Mammary epithelial cell (primary cell): ENCODE measurements at regions of chr4 and their contacts with region 1.

Region 1: DNA sequence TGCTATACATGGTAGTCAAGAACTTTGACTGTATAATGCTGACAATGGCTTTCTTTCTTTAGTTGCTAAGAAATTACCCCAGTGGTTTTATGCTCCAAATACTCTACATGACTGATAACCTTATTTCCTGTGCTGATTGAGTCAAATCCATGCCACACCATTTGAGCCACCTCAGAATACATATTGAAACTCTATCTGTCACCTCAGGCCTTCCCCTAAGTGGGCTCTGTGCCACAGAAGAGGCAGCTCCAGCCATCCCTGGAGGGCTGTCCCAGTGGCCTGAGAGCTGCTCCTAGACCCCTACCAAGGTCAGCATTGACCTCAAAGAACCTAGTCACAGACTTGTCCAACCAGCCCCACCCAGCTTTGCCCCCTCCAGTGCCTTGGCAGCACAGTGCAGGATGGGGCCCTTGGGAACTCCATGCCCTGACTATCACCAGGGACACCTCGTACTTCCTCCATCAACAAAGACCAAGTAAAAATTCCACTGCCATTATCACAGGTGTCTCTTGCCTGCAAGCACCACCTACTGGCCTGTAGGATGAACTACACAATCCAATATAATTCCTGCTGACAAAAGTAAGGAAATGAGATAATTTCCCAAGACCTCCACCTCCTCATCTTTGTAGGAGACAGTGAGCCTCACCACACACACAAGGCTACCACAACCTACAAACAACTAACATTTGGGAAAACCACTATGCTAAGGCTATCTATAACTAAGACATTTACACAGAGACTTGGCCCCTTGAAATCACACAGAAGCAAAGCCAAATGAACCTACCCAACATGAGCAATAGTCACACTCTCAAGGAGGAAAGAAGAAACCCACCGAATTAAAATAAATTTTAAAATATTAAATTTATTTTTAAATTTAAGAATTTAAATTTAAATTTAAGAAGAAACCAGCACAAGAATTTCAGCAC is 239.9 kb downstream of the NKX6-1 start:
- DNase-seq: peak; percentile 21
- H3K4me3 ChIP-seq: no peak overlapping the region
- H3K27ac ChIP-seq: no peak overlapping the region
- H3K4me1 ChIP-seq: no peaks in the 10 kb centered on the region
- H3K27me3 ChIP-seq: no peaks in the 10 kb centered on the region
- CTCF ChIP-seq: peak; percentile 79 to 82

Region 2: GRCh38 chr4:83503974-83504373 is 755.2 kb before region 1 on chr4:
- CTCF ChIA-PET with region 1: no interaction called
- dilution Hi-C with region 1: no loop called
- in situ Hi-C with region 1: no loop called
- intact Hi-C with region 1: loop called (anchors 5 kb)
- DNase-seq: no peak
- H3K4me3 ChIP-seq: no peak overlapping the region
- H3K27ac ChIP-seq: no peak overlapping the region
- H3K4me1 ChIP-seq: no peaks in the 10 kb centered on the region
- H3K27me3 ChIP-seq: no peaks in the 10 kb centered on the region
- CTCF ChIP-seq: no peak

Region 3: DNA sequence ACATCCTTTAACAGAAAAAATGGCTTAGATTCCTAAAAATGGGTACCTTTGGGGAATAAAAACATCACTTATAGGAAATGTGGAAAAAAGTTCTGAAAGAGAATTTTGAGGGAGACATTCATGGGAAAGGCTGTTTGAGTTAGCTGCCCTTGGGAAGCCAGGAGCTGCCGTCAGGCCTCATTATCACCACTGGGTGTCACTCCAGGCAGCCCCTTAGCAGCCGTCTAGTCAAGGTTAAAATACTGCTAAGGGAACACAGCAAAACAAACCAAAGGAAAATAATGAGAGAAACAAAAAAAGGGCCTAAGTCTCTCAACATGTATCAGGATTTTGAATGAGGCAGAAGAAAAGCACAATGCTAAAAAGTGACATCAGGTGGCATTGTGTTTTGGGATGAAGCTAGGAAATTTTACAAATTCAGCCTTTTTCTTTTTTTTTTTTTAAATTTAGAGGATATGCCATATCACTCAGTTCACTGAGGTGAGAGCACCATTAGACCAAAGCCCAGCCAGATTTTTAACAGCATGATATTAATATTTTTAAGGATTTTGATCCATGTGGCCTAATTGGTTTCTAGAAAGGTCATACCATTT is 488.0 kb before region 1 on chr4:
- CTCF ChIA-PET with region 1: no interaction called
- dilution Hi-C with region 1: no loop called
- in situ Hi-C with region 1: no loop called
- intact Hi-C with region 1: loop called (anchors 1 kb)
- DNase-seq: peak; percentile 25
- H3K4me3 ChIP-seq: no peak overlapping the region
- H3K27ac ChIP-seq: no peak overlapping the region
- H3K4me1 ChIP-seq: no peaks in the 10 kb centered on the region
- H3K27me3 ChIP-seq: peaks cover 2% of the 10 kb centered on the region
- CTCF ChIP-seq: peak; percentile 74 to 80

Region 4: GRCh38 chr4:83961575-83961974 is 297.6 kb before region 1 on chr4:
- CTCF ChIA-PET with region 1: no interaction called
- dilution Hi-C with region 1: no loop called
- in situ Hi-C with region 1: no loop called
- intact Hi-C with region 1: loop called (anchors 10 kb)
- DNase-seq: no peak
- H3K4me3 ChIP-seq: no peak overlapping the region
- H3K27ac ChIP-seq: no peak overlapping the region
- H3K4me1 ChIP-seq: no peaks in the 10 kb centered on the region
- H3K27me3 ChIP-seq: peaks cover 2% of the 10 kb centered on the region
- CTCF ChIP-seq: peak; percentile 4 to 39

Region 5: DNA sequence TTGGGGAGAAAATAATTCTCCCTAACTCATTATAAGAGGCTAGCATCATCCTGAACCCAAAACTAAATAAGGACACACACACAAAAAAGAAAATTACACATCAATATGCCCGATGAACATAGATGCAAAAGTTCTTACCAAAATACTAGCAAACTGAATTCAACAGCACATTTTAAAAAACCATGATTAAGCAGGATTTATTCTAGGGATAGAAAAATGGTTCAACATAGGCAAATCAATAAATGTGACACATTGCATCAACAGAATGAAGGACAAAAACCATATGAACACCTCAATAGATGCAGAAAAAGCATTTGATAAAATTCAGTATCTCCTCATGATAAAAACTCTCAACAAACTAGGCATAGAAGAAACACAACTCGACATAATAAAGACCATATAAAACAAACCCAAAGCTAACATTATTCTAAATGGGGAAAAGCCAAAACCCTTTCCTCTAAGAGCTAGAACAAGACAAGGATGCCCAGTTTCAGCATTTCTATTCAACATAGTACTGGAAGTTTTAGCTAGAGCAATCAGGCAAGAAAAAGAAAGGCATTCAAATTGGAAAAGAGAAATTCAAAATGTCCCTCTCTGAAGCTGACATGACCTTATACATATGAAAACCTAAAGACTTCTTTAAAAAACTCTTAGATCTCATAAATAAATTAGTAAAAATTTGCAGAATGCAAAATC is 39.0 kb after region 1 on chr4:
- CTCF ChIA-PET with region 1: no interaction called
- dilution Hi-C with region 1: no loop called
- in situ Hi-C with region 1: no loop called
- intact Hi-C with region 1: no loop called
- DNase-seq: no peak
- H3K4me3 ChIP-seq: no peak overlapping the region
- H3K27ac ChIP-seq: no peak overlapping the region
- H3K4me1 ChIP-seq: no peaks in the 10 kb centered on the region
- H3K27me3 ChIP-seq: no peaks in the 10 kb centered on the region
- CTCF ChIP-seq: no peak

Region 6: DNA sequence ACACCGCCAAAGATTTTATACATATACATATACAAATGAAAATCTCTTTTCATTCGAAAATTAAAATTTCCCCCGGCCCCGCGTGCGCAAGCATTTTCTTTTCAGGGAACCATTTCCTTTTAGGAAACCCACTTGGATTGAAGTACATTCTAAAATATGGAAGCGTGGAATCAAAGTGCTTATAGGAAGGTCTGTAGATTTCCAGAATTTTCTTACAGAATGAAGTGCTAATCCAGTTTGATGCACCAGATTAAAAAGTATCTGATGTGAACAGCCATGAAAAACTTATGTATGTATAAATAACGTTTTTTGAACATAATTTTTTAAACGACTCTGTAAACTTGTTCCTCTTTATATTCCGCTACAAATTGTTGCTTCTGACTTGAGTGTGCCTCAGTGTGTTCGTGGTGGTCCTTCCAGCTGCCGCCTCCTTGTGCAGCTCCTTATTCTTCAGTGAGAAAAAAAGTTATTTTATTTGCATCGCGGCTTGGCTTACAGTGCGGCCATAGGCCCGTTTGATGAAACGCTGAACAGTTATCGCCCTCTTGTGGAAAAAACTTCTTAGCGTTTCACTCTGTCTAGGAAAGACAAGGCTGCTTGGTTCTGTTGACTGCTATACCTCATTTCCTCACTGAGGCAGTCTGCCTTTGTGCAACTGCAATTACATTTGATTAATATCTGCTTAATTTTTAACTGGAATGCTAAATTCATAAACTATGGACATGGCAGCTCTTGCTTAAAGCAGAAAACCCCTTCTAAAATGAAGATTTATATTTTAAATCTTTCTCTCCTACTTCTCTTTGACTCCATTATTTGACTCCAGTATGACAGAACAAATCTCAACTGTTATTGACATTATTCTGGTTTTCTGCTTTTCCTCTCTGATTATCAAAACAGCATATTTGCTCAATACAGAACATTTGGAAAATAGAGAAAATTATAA is 244.6 kb after region 1 on chr4:
- CTCF ChIA-PET with region 1: no interaction called
- dilution Hi-C with region 1: no loop called
- in situ Hi-C with region 1: no loop called
- intact Hi-C with region 1: loop called (anchors 10 kb)
- DNase-seq: peak; percentile 52
- H3K4me3 ChIP-seq: no peak overlapping the region
- H3K27ac ChIP-seq: no peak overlapping the region
- H3K4me1 ChIP-seq: peaks cover 9% of the 10 kb centered on the region
- H3K27me3 ChIP-seq: peaks cover 44% of the 10 kb centered on the region
- CTCF ChIP-seq: peak; percentile 75 to 82